ENCODE measurements at regions of chr10 and their contacts with region 1.

Region 1: GRCh38 chr10:72364239-72364777 is 9.6 kb upstream of the DNAJB12 start:
- DNase-seq: peak; percentile 87 to 93
- ATAC-seq: peak; percentile 88 to 97 (median 96)
- H3K4me3 ChIP-seq: peak overlapping the region in 7 of 10 donors; percentile 9 to 34 (median 17)
- H3K27ac ChIP-seq: peak overlapping the region in 7 of 10 donors; percentile 13 to 75 (median 60)
- H3K4me1 ChIP-seq: peaks cover 0 to 14% (median 8%) of the 10 kb centered on the region in 9 donors
- H3K27me3 ChIP-seq: no peaks in the 10 kb centered on the region
- CTCF ChIP-seq: peak; percentile 82 to 98 (median 92)

Region 2: DNA sequence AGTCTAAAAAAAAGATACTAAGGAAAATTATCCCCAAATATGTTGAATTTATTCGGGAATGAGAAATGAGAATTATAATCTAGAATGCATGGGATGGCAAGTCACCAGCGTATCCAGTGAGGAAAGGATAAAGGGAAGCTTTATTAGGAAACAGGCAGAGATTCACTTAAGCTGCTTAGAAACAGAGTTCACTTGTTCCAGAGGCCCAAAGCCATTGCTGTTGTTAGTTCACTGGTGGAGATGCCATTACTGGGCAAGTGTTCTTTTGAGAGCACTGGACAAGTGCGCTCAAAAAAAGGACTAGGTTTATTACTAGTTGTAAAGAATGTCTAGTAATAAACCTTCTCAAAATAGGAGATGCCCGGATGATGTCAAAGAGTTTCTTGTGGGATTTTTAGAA is 210.3 kb after region 1 on chr10:
- intact Hi-C with region 1: loop called in 3 of 10 experiments (anchors 10 kb)
- DNase-seq: no peak
- ATAC-seq: no peak
- H3K4me3 ChIP-seq: no peak overlapping the region
- H3K27ac ChIP-seq: no peak overlapping the region
- H3K4me1 ChIP-seq: no peaks in the 10 kb centered on the region
- H3K27me3 ChIP-seq: no peaks in the 10 kb centered on the region
- CTCF ChIP-seq: no peak

Region 3: DNA sequence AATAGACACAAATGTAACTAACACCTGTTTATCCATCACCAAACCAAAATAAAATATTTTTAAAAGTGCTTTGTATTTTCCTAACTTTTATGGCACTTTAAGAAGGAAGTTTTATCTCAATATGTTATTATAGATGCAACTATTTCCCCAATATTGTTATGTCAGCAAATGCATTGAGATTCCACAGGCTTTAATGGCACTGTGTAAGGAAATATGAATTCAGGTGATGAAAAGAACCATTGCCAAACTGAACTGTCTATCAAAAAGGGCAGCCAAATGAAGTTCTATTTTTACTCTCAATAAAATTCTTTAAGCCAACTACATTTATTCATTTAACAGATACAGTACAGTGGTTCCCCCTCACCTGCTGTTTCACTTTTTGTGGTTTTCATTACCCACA is 462.0 kb after region 1 on chr10:
- intact Hi-C with region 1: loop called in 6 of 10 experiments (anchors 5 kb)
- DNase-seq: no peak
- ATAC-seq: peak in 1 of 8 donors; percentile 44
- H3K4me3 ChIP-seq: no peak overlapping the region
- H3K27ac ChIP-seq: no peak overlapping the region
- H3K4me1 ChIP-seq: peaks cover 0 to 50% (median 23%) of the 10 kb centered on the region in 9 donors
- H3K27me3 ChIP-seq: no peaks in the 10 kb centered on the region
- CTCF ChIP-seq: no peak

Region 4: GRCh38 chr10:72875250-72876055 is 511.1 kb after region 1 on chr10:
- intact Hi-C with region 1: loop called in 6 of 10 experiments (anchors 5 to 10 kb)
- DNase-seq: no peak
- ATAC-seq: no peak
- H3K4me3 ChIP-seq: no peak overlapping the region
- H3K27ac ChIP-seq: no peak overlapping the region
- H3K4me1 ChIP-seq: no peaks in the 10 kb centered on the region
- H3K27me3 ChIP-seq: no peaks in the 10 kb centered on the region
- CTCF ChIP-seq: peak in 8 of 9 donors; percentile 26 to 66 (median 58)

Region 5: GRCh38 chr10:73159038-73159648 is 794.8 kb after region 1 on chr10:
- intact Hi-C with region 1: loop called in 2 of 10 experiments (anchors 10 kb)
- DNase-seq: peak; percentile 33 to 47
- ATAC-seq: peak in 1 of 8 donors; percentile 56
- H3K4me3 ChIP-seq: no peak overlapping the region
- H3K27ac ChIP-seq: no peak overlapping the region
- H3K4me1 ChIP-seq: peaks cover 0 to 38% (median 27%) of the 10 kb centered on the region in 9 donors
- H3K27me3 ChIP-seq: no peaks in the 10 kb centered on the region
- CTCF ChIP-seq: peak; percentile 40 to 86 (median 81)

Measured in heart right ventricle (tissue), 16 donors.